ENCODE measurements at regions of chr12 and their contacts with region 1.

Region 1: DNA sequence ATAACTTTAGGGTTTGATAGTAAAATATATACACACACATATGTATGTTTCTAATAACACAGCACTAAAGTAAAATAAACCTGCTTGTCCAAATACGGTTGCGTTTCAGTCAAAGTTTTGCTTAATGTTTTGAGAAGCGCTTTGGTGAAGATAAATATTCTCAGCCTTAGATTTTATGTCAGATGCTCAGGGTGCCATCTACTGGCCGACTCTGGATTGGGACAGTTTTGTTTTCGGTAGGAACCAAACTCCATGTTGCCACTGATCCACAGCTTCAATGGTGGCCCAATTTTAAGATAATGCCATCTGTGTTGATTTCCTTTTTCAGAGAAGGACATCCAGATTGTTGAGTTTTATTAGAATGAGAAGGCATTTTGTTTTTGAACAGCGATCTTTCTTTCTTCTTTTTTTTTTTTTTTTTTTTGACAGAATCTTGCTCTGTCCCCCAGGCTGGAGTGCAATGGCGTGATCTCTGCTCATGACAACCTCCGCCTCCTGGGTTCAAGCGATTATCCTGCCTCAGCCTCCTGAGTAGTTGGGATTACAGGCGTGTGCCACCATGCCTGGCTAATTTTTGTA is 43.1 kb downstream of the LLPH start:
- DNase-seq: peak; percentile 53 to 77 (median 75)
- H3K4me3 ChIP-seq: no peak overlapping the region
- H3K27ac ChIP-seq: no peak overlapping the region
- H3K4me1 ChIP-seq: peaks cover 2% of the 10 kb centered on the region
- H3K27me3 ChIP-seq: no peaks in the 10 kb centered on the region
- CTCF ChIP-seq: peak; percentile 40 to 69 (median 60)
- EP300 ChIP-seq: no peak
- POLR2A ChIP-seq: no peak

Region 2: GRCh38 chr12:64890873-64891468 is 1196.5 kb before region 1 on chr12:
- intact Hi-C with region 1: loop called in 1 of 4 experiments (anchors 10 kb)
- DNase-seq: no peak
- H3K4me3 ChIP-seq: no peak overlapping the region
- H3K27ac ChIP-seq: no peak overlapping the region
- H3K4me1 ChIP-seq: no peaks in the 10 kb centered on the region
- H3K27me3 ChIP-seq: no peaks in the 10 kb centered on the region
- CTCF ChIP-seq: peak; percentile 67 to 70 (median 67)
- EP300 ChIP-seq: no peak
- POLR2A ChIP-seq: no peak

Region 3: DNA sequence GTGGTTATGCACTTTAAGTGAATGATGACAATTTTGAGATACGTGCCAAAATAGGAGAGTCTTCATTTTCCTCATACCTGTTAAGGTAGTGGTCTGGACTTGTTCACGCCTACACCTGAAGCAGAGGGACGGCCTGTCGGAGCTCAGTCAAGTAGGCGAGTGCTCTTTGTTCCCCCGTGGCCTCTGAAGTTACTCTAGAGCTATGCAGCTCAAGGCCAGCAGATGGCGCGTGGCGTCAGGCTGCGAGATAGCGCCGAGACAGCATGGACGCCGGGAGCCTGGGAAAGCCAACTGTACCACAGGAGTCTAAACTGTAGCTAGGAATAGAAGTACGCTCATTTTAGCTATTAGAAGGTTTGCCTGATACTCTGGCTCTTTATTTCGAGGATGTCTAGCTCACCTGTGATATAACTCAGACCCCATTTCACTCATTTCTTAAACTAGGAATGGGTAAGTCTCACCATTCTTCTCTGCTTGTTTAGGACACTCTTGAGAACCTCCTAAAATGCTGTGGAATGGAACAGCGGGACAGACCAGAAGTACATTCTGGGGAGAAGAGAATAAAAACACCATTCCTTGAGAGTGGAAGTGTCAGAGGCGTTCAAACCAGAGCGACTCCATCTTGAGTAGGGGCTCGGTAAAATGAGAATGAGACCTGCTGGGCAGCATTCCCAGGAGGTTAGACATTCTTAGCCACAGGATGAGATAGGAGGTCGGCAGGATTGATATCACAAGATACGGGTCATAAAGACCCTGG is 530.6 kb before region 1 on chr12:
- intact Hi-C with region 1: loop called in 2 of 4 experiments (anchors 5 to 10 kb)
- DNase-seq: peak; percentile 59 to 80 (median 73)
- H3K4me3 ChIP-seq: no peak overlapping the region
- H3K27ac ChIP-seq: no peak overlapping the region
- H3K4me1 ChIP-seq: no peaks in the 10 kb centered on the region
- H3K27me3 ChIP-seq: no peaks in the 10 kb centered on the region
- CTCF ChIP-seq: peak; percentile 59 to 82 (median 69)
- EP300 ChIP-seq: no peak
- POLR2A ChIP-seq: no peak

Region 4: GRCh38 chr12:65602610-65603295 is 484.7 kb before region 1 on chr12:
- intact Hi-C with region 1: loop called in 1 of 4 experiments (anchors 5 kb)
- DNase-seq: peak; percentile 55 to 72 (median 68)
- H3K4me3 ChIP-seq: no peak overlapping the region
- H3K27ac ChIP-seq: no peak overlapping the region
- H3K4me1 ChIP-seq: no peaks in the 10 kb centered on the region
- H3K27me3 ChIP-seq: no peaks in the 10 kb centered on the region
- CTCF ChIP-seq: peak in 1 of 3 donors; percentile 63
- EP300 ChIP-seq: no peak
- POLR2A ChIP-seq: no peak

Region 5: DNA sequence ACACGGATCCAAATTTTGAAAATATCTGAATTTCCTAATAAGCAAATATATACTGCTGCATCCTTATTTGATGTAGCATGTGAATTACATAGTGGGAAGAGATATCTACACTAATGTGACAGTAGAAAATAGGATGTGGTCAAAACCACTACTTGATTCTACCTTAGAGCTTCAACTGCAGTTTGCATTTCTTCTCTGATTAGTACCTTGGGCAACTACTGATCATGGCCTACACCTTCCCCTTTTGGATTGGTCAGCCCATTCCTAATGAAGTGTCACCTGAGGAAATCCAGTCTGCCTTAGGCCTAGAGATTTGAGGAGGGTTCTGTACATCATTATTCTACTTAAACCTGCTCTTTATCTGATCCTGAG is 32.4 kb after region 1 on chr12:
- intact Hi-C with region 1: no loop called
- DNase-seq: no peak
- H3K4me3 ChIP-seq: no peak overlapping the region
- H3K27ac ChIP-seq: no peak overlapping the region
- H3K4me1 ChIP-seq: no peaks in the 10 kb centered on the region
- H3K27me3 ChIP-seq: no peaks in the 10 kb centered on the region
- CTCF ChIP-seq: no peak
- EP300 ChIP-seq: no peak
- POLR2A ChIP-seq: no peak